K562 (cell line): ENCODE measurements at regions of chr10 and their contacts with region 1.

Region 1: DNA sequence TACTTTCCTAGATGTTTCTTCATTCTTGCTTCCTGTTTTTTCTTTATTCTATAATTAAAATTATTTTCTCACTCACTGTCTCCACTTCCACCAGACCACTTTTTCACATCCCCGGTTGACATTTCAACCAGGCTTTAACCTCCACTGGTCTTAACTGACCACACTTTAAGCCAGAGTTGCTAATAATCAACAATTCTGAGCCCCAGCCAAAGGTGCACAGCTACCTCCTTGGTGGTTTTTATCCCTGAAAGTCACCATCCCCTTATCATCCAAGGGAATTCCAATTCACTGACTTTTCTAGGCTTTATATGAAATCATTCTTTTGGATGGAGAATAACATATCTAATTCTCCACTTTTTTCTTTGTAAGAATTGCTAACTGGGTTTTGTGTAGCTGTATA is 138.9 kb downstream of the FRMD4A start:
- DNase-seq: no peak
- ATAC-seq: no peak
- H3K4me3 ChIP-seq: no peak overlapping the region
- H3K27ac ChIP-seq: no peak overlapping the region
- H3K4me1 ChIP-seq: no peaks in the 10 kb centered on the region
- H3K27me3 ChIP-seq: peaks cover 6 to 23% of the 10 kb centered on the region in 2 experiments; a peak in 4 of 5 replicates
- CTCF ChIP-seq: no peak
- EP300 ChIP-seq: no peak
- POLR2A ChIP-seq: no peak
- RAD21 ChIP-seq: no peak

Region 2: GRCh38 chr10:13939391-13939790 is 252.5 kb before region 1 on chr10:
- CTCF ChIA-PET with region 1: no interaction called
- POLR2A ChIA-PET with region 1: no interaction called
- in situ Hi-C with region 1: no loop called
- intact Hi-C with region 1: no loop called
- DNase-seq: no peak
- ATAC-seq: no peak
- H3K4me3 ChIP-seq: no peak overlapping the region
- H3K27ac ChIP-seq: no peak overlapping the region
- H3K4me1 ChIP-seq: no peaks in the 10 kb centered on the region
- H3K27me3 ChIP-seq: 0 out of 5 replicates have a peak, but pooled peaks cover 0 to 3% of the 10 kb centered on the region in 2 experiments
- CTCF ChIP-seq: no peak
- EP300 ChIP-seq: no peak
- POLR2A ChIP-seq: no peak
- RAD21 ChIP-seq: no peak

Region 3: GRCh38 chr10:14146025-14146424 is 45.8 kb before region 1 on chr10:
- CTCF ChIA-PET with region 1: no interaction called
- POLR2A ChIA-PET with region 1: no interaction called
- in situ Hi-C with region 1: no loop called
- intact Hi-C with region 1: no loop called
- DNase-seq: no peak
- ATAC-seq: no peak
- H3K4me3 ChIP-seq: no peak overlapping the region
- H3K27ac ChIP-seq: no peak overlapping the region
- H3K4me1 ChIP-seq: no peaks in the 10 kb centered on the region
- H3K27me3 ChIP-seq: peaks cover 11% of the 10 kb centered on the region in 2 experiments; a peak in 4 of 5 replicates
- CTCF ChIP-seq: no peak
- EP300 ChIP-seq: no peak
- POLR2A ChIP-seq: no peak
- RAD21 ChIP-seq: no peak

Region 4: DNA sequence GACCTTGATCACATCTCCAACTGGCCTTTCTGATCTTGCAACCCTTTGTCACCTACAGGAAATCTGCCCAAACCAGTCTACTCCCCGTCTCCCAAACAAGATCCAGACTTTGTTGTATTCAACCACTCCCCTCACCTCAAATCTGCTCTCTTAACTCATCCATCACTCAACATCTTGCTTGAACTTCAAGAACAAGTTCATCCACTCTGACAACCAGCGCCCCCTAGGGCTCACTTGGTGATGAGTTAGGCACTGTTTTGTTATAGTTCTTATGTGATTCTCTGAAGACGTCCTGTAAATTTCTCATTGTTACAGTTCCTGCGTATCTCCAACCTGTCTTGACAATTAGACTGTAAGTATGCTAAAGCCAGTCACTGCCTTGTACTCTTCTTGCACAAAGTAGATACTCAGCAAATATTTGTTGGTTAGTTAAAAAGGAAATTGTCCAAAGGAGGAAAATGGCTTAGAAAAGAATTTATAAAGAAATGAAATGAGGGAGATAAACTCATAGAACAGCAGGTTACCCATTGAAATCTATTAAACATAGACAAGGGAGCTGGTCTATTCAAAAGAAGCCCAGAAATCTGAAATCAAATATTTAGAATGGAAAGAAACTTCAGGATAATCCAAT is 133.6 kb after region 1 on chr10:
- CTCF ChIA-PET with region 1: no interaction called
- POLR2A ChIA-PET with region 1: no interaction called
- in situ Hi-C with region 1: no loop called
- intact Hi-C with region 1: loop called (anchors 10 kb)
- DNase-seq: peak; percentile 42 to 73 (median 59)
- ATAC-seq: peak; percentile 73
- H3K4me3 ChIP-seq: no peak overlapping the region
- H3K27ac ChIP-seq: no peak overlapping the region
- H3K4me1 ChIP-seq: no peaks in the 10 kb centered on the region
- H3K27me3 ChIP-seq: peaks cover 1 to 11% of the 10 kb centered on the region in 2 experiments; a peak in 3 of 5 replicates
- CTCF ChIP-seq: peak; percentile 64 to 78 (median 73)
- EP300 ChIP-seq: no peak
- POLR2A ChIP-seq: no peak
- RAD21 ChIP-seq: peak in 1 of 2 experiments; percentile 53; a peak in 2 of 4 replicates

Region 5: GRCh38 chr10:14478604-14479003 is 286.7 kb after region 1 on chr10:
- CTCF ChIA-PET with region 1: interaction called, 5 read pairs
- POLR2A ChIA-PET with region 1: no interaction called
- in situ Hi-C with region 1: loop called (anchors 10 kb)
- intact Hi-C with region 1: loop called (anchors 2 kb)
- DNase-seq: peak; percentile 15 to 31 (median 23)
- ATAC-seq: peak; percentile 73
- H3K4me3 ChIP-seq: no peak overlapping the region
- H3K27ac ChIP-seq: no peak overlapping the region
- H3K4me1 ChIP-seq: no peaks in the 10 kb centered on the region
- H3K27me3 ChIP-seq: peaks cover 8 to 43% of the 10 kb centered on the region in 2 experiments; a peak in 4 of 5 replicates
- CTCF ChIP-seq: peak; percentile 41 to 68 (median 59); a peak in 4 of 6 replicates
- EP300 ChIP-seq: no peak
- POLR2A ChIP-seq: no peak
- RAD21 ChIP-seq: peak; percentile 51 to 68